AG04450 (cell line): ENCODE measurements at regions of chr20 and their contacts with region 1.

Region 1: GRCh38 chr20:9616833-9617489 is 102.6 kb downstream of the LAMP5 start:
- DNase-seq: peak; percentile 23
- H3K4me3 ChIP-seq: no peak overlapping the region
- H3K27ac ChIP-seq: no peak overlapping the region
- H3K27me3 ChIP-seq: peaks cover 13% of the 10 kb centered on the region
- CTCF ChIP-seq: peak; percentile 76

Region 2: GRCh38 chr20:9590189-9590588 is 26.8 kb before region 1 on chr20:
- CTCF ChIA-PET with region 1: interaction called, 12 read pairs
- POLR2A ChIA-PET with region 1: no interaction called
- DNase-seq: peak; percentile 55
- H3K4me3 ChIP-seq: no peak overlapping the region
- H3K27ac ChIP-seq: no peak overlapping the region
- H3K27me3 ChIP-seq: no peaks in the 10 kb centered on the region
- CTCF ChIP-seq: no peak

Region 3: GRCh38 chr20:9627219-9627618 is 10.3 kb after region 1 on chr20:
- CTCF ChIA-PET with region 1: interaction called, 12 read pairs
- POLR2A ChIA-PET with region 1: no interaction called
- DNase-seq: no peak
- H3K4me3 ChIP-seq: no peak overlapping the region
- H3K27ac ChIP-seq: no peak overlapping the region
- H3K27me3 ChIP-seq: peaks cover 3% of the 10 kb centered on the region
- CTCF ChIP-seq: no peak

Region 4: GRCh38 chr20:9903048-9903655 is 286.2 kb after region 1 on chr20:
- CTCF ChIA-PET with region 1: interaction called, 297 read pairs
- POLR2A ChIA-PET with region 1: no interaction called
- DNase-seq: no peak
- H3K4me3 ChIP-seq: no peak overlapping the region
- H3K27ac ChIP-seq: no peak overlapping the region
- H3K27me3 ChIP-seq: no peaks in the 10 kb centered on the region
- CTCF ChIP-seq: peak; percentile 57

Region 5: DNA sequence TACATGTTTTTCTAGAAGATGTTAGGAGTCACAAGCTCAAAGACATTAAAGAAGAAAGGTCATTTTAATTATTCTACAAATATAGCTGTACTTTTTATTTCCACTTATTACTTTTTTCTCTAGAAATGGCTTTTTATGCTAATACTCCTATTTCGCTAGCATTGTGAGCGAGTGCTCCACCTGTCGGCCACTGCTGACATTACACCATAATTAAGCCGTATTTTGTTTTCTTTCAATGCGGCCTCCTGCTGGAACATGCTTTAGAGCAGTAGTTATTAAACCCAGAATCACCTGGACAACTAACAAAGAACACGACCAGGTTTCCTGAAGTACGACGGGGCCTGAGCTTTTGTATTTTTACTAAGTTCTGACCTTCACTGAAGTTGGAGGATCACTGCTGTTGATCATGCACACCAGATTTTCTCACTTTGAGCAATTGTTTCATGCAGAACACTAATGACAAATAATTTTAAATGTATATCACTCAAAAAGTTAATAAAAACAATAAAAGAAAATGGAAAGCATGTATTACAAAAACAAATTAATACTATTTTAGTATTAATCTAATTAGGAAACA is 296.0 kb after region 1 on chr20:
- CTCF ChIA-PET with region 1: interaction called, 297 read pairs
- POLR2A ChIA-PET with region 1: no interaction called
- DNase-seq: peak; percentile 3
- H3K4me3 ChIP-seq: no peak overlapping the region
- H3K27ac ChIP-seq: no peak overlapping the region
- H3K27me3 ChIP-seq: no peaks in the 10 kb centered on the region
- CTCF ChIP-seq: peak; percentile 86

Region 6: GRCh38 chr20:10427060-10427692 is 810.2 kb after region 1 on chr20:
- CTCF ChIA-PET with region 1: interaction called, 22 read pairs
- POLR2A ChIA-PET with region 1: no interaction called
- DNase-seq: peak; percentile 34
- H3K4me3 ChIP-seq: no peak overlapping the region
- H3K27ac ChIP-seq: no peak overlapping the region
- H3K27me3 ChIP-seq: no peaks in the 10 kb centered on the region
- CTCF ChIP-seq: peak; percentile 90